A549 (cell line): ENCODE measurements at regions of chr5 and their contacts with region 1.

Region 1: DNA sequence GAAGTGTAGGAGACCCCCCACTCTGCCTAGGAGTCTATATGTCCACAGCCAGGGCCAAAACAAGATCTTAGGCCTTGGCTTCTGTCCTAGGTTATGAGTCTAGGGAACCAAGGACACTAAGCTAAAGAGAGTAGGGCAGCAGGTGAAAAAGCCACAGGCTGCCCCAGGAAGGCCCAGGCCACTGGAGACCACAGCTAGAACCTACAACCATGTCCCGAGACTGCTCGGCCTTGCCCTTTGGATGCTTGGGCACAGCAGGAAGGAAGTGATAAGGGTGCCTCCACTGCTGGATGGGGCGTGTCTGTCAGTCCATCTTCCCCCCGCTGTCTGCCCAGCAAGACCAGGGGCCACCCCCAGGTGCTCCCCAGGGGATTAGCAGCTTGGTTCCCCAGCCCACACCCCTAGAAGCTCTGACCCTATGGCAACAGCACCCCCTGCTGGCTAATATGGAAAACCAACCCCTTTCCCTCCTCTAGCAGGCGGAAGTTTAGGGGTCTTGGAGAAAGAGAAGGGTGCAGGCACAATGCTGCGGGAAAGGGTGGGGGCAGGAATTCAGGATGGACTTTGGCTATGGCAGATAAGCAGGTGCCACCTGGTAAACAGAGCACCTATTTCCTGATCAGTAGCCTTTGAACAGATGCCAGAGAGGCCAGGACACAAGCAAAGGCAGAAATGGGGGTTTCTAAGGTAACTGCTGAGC is 10.5 kb upstream of the IRF1 start:
- DNase-seq: peak; percentile 51 to 71
- ATAC-seq: peak in 1 of 2 experiments; percentile 29; a peak in 3 of 6 replicates
- H3K4me3 ChIP-seq: no peak overlapping the region
- H3K27ac ChIP-seq: peak overlapping the region; percentile 37 to 97; a peak in 4 of 6 replicates
- H3K4me1 ChIP-seq: peaks cover 41% of the 10 kb centered on the region
- CTCF ChIP-seq: peak; percentile 89
- EP300 ChIP-seq: no peak
- POLR2A ChIP-seq: no peak
- RAD21 ChIP-seq: peak; percentile 94 to 96

Region 2: GRCh38 chr5:132265336-132266030 is 235.6 kb before region 1 on chr5:
- CTCF ChIA-PET with region 1: no interaction called
- POLR2A ChIA-PET with region 1: no interaction called
- DNase-seq: peak; percentile 62 to 73
- ATAC-seq: peak; percentile 61 to 71
- H3K4me3 ChIP-seq: no peak overlapping the region
- H3K27ac ChIP-seq: peak overlapping the region; percentile 48 to 77; a peak in 5 of 6 replicates
- H3K4me1 ChIP-seq: peaks cover 51% of the 10 kb centered on the region
- CTCF ChIP-seq: no peak
- EP300 ChIP-seq: no peak
- POLR2A ChIP-seq: no peak
- RAD21 ChIP-seq: no peak

Region 3: DNA sequence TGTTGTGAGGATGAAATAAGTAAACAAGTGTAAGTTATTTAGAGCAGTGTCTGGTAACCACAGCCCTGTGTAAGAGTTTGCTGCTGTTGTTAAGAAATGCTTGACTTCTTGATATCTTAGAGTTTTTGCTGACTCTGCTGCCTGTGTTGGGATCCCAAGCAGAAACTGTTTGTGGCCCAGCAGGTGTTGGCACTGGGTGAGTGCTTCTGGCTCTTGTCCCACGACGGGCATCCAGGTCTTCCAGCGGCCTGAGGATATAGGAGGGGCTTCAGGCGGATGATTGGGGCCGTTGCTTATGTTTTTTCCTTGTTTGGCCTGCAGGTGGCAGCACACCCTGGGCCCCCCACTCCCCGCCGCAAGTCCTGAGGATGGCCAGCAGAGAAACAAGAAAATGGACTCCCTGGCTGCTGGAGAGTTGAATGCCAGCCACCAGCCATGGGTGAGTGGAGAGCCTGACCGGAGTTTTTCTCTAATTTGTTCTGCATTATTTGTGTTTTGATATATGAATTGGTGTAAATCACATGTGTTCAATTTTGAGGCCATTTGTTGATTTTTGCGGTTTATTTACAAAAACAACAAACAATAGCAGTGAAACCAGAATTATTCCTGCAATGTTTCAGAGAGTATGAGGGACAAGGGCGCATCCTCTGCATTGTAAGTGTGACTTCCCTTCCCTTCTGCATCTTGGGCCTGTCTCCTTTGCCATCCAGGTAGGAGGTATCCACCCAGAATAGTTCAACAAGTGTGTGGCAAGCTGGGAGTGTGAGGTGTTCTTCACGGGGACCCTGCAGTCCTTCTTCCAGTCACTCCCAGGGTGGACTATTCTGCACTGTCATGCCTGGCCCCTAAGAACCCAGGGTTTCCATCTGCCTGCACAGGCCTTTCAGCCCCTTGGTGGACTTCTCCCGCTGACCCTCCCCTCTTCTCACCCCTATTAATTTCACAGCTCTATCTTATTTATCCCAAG is 81.3 kb before region 1 on chr5:
- CTCF ChIA-PET with region 1: interaction called, 91 read pairs
- POLR2A ChIA-PET with region 1: interaction called, 20 read pairs
- DNase-seq: peak; percentile 84 to 88
- ATAC-seq: peak; percentile 87 to 96
- H3K4me3 ChIP-seq: no peak overlapping the region
- H3K27ac ChIP-seq: peak overlapping the region; percentile 38 to 77; a peak in 5 of 6 replicates
- H3K4me1 ChIP-seq: peaks cover 33% of the 10 kb centered on the region
- CTCF ChIP-seq: peak; percentile 89
- EP300 ChIP-seq: no peak
- POLR2A ChIP-seq: no peak
- RAD21 ChIP-seq: peak; percentile 79 to 82

Region 4: DNA sequence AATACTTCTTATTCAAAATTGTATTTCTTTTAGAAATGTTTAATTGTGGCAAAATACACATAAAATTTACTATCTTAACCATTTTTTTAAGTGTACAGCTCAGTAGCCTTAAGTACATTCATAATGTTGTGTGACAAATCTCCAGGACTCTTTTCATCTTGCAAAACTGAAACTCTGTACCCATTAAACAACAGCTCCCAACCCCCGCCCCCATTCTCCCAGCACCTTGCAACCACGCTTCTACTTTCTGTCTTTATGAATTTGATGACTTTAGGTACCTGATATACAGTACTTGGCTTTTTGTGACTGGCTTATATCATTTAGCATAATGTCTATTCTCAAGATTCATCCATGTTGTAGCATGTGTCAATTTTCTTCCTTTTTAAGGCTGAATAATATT is 45.0 kb after region 1 on chr5:
- CTCF ChIA-PET with region 1: no interaction called
- POLR2A ChIA-PET with region 1: no interaction called
- DNase-seq: no peak
- ATAC-seq: no peak
- H3K4me3 ChIP-seq: no peak overlapping the region
- H3K27ac ChIP-seq: no peak overlapping the region
- H3K4me1 ChIP-seq: no peaks in the 10 kb centered on the region
- CTCF ChIP-seq: no peak
- EP300 ChIP-seq: no peak
- POLR2A ChIP-seq: no peak
- RAD21 ChIP-seq: no peak